ENCODE measurements at regions of chr2 and their contacts with region 1.

Region 1: DNA sequence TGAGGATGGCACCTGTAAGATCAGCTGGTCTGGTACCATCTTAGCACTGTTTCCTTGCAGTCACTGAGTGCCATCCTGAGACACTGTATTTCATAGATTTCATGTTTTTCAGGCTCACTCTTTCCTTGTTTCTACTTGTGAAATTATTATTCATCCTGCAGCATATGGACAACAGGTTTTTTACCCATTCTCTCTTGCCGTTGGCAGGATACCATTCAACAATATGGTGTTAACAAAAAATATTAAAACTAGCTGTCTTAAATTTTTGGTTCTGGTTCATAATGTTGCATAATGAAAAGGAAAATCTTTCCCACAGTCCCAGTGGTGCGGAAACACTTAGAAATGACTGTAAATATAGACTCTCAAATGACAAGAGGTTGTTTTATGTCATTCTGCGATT is 23.1 kb upstream of the ATG16L1 start:
- DNase-seq: no peak
- ATAC-seq: no peak
- H3K4me3 ChIP-seq: no peak overlapping the region
- H3K27ac ChIP-seq: no peak overlapping the region
- H3K4me1 ChIP-seq: no peaks in the 10 kb centered on the region
- H3K27me3 ChIP-seq: no peaks in the 10 kb centered on the region
- CTCF ChIP-seq: no peak

Region 2: DNA sequence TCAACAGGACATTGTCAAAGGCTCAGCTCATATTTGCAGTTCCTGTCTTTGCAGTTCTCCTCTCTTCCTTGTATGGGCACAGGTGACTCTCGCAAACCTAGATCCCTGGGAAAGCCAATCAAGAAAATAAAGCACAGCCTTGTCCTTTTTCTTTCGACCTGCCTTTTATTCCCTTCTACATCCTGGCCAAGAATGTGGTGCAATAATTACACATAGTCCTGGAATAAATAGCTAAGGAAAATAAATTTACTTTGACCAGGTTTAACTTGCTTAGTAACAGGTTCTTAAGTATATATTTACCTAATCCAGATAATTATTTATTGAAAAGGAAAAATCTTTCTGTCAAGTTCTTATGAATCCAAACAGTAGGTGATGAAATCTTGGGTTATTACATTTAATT is 43.4 kb after region 1 on chr2:
- CTCF ChIA-PET with region 1: no interaction called
- POLR2A ChIA-PET with region 1: no interaction called
- in situ Hi-C with region 1: no loop called
- intact Hi-C with region 1: no loop called
- DNase-seq: no peak
- ATAC-seq: no peak
- H3K4me3 ChIP-seq: no peak overlapping the region
- H3K27ac ChIP-seq: no peak overlapping the region
- H3K4me1 ChIP-seq: no peaks in the 10 kb centered on the region
- H3K27me3 ChIP-seq: no peaks in the 10 kb centered on the region
- CTCF ChIP-seq: no peak

Region 3: GRCh38 chr2:233288719-233289118 is 60.3 kb after region 1 on chr2:
- CTCF ChIA-PET with region 1: no interaction called
- POLR2A ChIA-PET with region 1: interaction called, 10 read pairs
- in situ Hi-C with region 1: no loop called
- intact Hi-C with region 1: no loop called
- DNase-seq: no peak
- ATAC-seq: no peak
- H3K4me3 ChIP-seq: no peak overlapping the region
- H3K27ac ChIP-seq: no peak overlapping the region
- H3K4me1 ChIP-seq: no peaks in the 10 kb centered on the region
- H3K27me3 ChIP-seq: no peaks in the 10 kb centered on the region
- CTCF ChIP-seq: no peak